Dendritic cell treated with granulocyte-macrophage colony-stimulating factor and Interleukin-4, amounts not matched to agents 40 ng/mL and 50 ng/mL, for 4 days (primary cell): ENCODE measurements at regions of chr9 and their contacts with region 1.

Region 1: GRCh38 chr9:101530077-101530711 is 3.5 kb upstream of the RNF20 start:
- H3K4me3 Mint-ChIP-seq: no peak overlapping the region
- H3K27ac Mint-ChIP-seq: no peak overlapping the region
- H3K4me1 Mint-ChIP-seq: peaks cover under 1% of the 10 kb centered on the region
- H3K27me3 Mint-ChIP-seq: peaks cover 5% of the 10 kb centered on the region

Region 2: GRCh38 chr9:101047848-101048402 is 482.3 kb before region 1 on chr9:
- intact Hi-C with region 1: no loop called
- H3K4me3 Mint-ChIP-seq: no peak overlapping the region
- H3K27ac Mint-ChIP-seq: no peak overlapping the region
- H3K4me1 Mint-ChIP-seq: no peaks in the 10 kb centered on the region
- H3K27me3 Mint-ChIP-seq: no peaks in the 10 kb centered on the region

Region 3: GRCh38 chr9:101458955-101459631 is 71.1 kb before region 1 on chr9:
- intact Hi-C with region 1: loop called (anchors 1 kb)
- H3K4me3 Mint-ChIP-seq: no peak overlapping the region
- H3K27ac Mint-ChIP-seq: no peak overlapping the region
- H3K4me1 Mint-ChIP-seq: no peaks in the 10 kb centered on the region
- H3K27me3 Mint-ChIP-seq: peaks cover 2% of the 10 kb centered on the region

Region 4: GRCh38 chr9:101578378-101578777 is 48.2 kb after region 1 on chr9:
- intact Hi-C with region 1: loop called (anchors 5 kb)
- H3K4me3 Mint-ChIP-seq: no peak overlapping the region
- H3K27ac Mint-ChIP-seq: peak overlapping the region; percentile 77
- H3K4me1 Mint-ChIP-seq: peaks cover 38% of the 10 kb centered on the region
- H3K27me3 Mint-ChIP-seq: no peaks in the 10 kb centered on the region